WTC11 (cell line): ENCODE measurements at regions of chr16 and their contacts with region 1.

Region 1: GRCh38 chr16:50593410-50594150 is 45.4 kb downstream of the NKD1 start:
- DNase-seq: peak; percentile 71
- ATAC-seq: peak; percentile 88
- H3K4me3 Mint-ChIP-seq: no peak overlapping the region
- H3K27ac Mint-ChIP-seq: peak overlapping the region; percentile 74; the same call in 1 of the 2 replicates
- H3K4me1 Mint-ChIP-seq: peaks cover 28% of the 10 kb centered on the region
- H3K27me3 Mint-ChIP-seq: no peaks in the 10 kb centered on the region
- CTCF ChIP-seq: 0 out of 2 replicates have a peak, but pooled peaks have one; percentile 19

Region 2: DNA sequence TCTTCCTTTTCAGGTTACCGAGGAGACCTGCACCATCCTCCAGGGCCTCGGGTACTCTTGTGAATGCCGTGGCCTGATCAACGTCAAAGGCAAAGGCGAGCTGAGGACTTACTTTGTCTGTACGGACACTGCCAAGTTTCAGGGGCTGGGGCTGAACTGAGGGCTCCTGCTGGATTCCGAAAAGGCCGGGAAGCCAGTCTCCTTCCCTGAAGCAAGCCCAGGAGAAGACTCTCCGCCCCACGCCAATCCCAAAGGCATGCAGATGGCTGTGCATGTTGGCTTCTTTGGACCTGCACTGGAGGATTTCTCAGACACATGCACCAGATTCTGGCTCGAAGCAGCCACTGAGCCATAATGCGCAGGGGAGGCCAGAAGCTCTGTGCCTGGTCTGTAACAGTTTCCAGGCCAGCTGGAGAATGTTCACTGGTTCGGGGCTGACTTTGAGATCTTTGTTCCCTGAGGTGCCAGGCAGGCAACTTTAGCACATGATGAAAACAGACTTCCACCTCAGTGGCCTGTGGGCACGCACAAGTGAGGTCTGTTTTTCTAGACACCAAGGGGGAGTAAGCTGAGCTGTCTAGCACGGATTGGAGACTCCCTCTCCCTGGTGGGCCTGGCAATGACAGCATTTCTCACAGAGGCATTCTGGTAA is 278.1 kb before region 1 on chr16:
- CTCF ChIA-PET with region 1: no interaction called
- POLR2A ChIA-PET with region 1: no interaction called
- DNase-seq: no peak
- ATAC-seq: no peak
- H3K4me3 Mint-ChIP-seq: no peak overlapping the region
- H3K27ac Mint-ChIP-seq: no peak overlapping the region
- H3K4me1 Mint-ChIP-seq: no peaks in the 10 kb centered on the region
- H3K27me3 Mint-ChIP-seq: no peaks in the 10 kb centered on the region
- CTCF ChIP-seq: no peak

Region 3: DNA sequence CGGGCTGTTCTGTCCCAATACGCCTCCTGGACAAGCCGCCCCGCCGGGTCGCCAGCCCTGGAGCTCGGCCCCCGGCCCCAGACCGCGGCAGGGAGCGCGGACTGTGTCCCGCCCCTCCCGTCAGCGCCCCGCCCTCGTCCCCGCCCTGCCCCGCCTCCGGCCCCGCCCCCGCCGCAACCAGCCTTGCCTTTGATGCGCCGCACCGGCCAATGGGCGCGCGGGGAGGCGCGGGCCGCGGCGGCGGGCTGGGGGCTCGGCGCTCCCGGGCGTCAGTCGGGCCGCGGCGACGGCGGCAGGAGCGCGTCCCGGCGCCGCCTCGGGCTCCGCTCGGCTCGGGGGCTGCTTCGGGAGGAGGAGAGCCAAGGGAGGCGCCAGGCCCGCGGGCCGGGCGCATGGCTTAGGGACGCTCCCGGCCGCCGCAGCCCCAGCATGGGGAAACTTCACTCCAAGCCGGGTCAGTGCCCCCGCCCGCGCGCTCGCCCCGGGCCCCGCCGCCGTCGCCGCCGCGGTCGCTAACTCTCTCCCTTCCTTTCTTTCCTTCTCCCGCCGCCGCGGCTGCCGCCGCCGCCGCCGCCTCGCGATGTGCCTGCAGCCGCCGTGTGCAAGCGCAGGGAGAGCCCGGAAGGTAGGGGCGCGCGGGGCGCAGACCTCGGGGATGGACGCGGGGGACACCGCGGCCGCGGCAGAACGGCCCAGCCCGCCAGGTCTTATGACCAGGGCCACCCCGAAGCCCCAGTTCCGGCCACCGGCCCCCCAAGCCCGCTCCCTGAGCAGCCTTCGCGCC is 45.3 kb before region 1 on chr16 and contains the start of gene NKD1:
- CTCF ChIA-PET with region 1: interaction called, 11 read pairs
- POLR2A ChIA-PET with region 1: no interaction called
- DNase-seq: peak; percentile 69
- ATAC-seq: peak; percentile 79
- H3K4me3 Mint-ChIP-seq: peak within 1 kb of the TSS; percentile 75
- H3K27ac Mint-ChIP-seq: no peak within 1 kb of the TSS
- H3K4me1 Mint-ChIP-seq: peaks cover 11% of the 10 kb centered on the region
- H3K27me3 Mint-ChIP-seq: peaks cover 46% of the 10 kb centered on the region
- CTCF ChIP-seq: no peak
- total RNA-seq, gene NKD1: 6.0 to 9.3 TPM (median 9.1 TPM) in 3 replicates

Region 4: DNA sequence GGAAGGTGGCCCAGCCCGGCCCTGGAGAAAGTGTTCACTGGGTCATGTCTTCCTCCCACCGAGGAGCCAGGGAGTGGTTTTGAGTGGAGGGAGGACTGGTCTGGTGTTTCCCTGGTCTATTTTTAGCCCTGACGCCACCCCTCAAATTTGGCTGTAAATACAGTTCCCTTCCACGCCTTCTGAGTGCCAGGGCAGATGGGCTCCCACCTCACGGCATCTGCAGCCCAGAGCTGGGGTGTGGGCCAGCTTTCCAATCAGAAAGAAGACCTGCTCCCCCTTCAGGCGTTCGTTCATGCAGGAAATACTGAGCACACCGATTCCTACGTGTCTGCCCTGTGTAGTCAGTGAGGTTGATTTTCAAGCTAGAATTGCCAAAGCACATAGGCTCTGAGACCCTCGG is 33.8 kb after region 1 on chr16:
- CTCF ChIA-PET with region 1: interaction called, 27 read pairs
- POLR2A ChIA-PET with region 1: no interaction called
- DNase-seq: peak; percentile 42
- ATAC-seq: peak; percentile 89
- H3K4me3 Mint-ChIP-seq: no peak overlapping the region
- H3K27ac Mint-ChIP-seq: no peak overlapping the region
- H3K4me1 Mint-ChIP-seq: peaks cover 3% of the 10 kb centered on the region; the same call in 1 of the 2 replicates
- H3K27me3 Mint-ChIP-seq: no peaks in the 10 kb centered on the region
- CTCF ChIP-seq: no peak

Region 5: DNA sequence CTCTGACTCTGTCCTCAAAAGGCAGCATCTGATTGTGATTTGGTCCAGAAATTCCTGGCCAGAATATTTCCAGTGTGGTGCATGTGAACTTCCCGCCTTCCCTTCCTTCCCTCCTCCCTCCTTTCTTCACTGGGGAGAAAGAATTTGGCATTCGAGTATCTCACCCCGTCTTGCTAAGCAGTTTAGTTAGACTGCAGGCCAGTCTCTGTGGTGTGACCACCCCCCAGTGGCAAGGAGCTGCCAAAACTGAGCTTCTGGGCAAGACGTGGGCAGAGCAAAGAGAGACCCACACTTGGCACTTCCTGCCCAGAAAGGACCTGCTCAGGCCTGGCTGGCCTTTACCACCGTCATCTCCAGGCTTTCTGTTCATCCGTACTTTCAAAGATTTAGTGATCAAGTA is 51.1 kb after region 1 on chr16:
- CTCF ChIA-PET with region 1: interaction called, 22 read pairs
- POLR2A ChIA-PET with region 1: interaction called, 3 read pairs
- DNase-seq: peak; percentile 35
- ATAC-seq: peak; percentile 72
- H3K4me3 Mint-ChIP-seq: no peak overlapping the region
- H3K27ac Mint-ChIP-seq: no peak overlapping the region
- H3K4me1 Mint-ChIP-seq: peaks cover 15% of the 10 kb centered on the region
- H3K27me3 Mint-ChIP-seq: no peaks in the 10 kb centered on the region
- CTCF ChIP-seq: no peak

Region 6: DNA sequence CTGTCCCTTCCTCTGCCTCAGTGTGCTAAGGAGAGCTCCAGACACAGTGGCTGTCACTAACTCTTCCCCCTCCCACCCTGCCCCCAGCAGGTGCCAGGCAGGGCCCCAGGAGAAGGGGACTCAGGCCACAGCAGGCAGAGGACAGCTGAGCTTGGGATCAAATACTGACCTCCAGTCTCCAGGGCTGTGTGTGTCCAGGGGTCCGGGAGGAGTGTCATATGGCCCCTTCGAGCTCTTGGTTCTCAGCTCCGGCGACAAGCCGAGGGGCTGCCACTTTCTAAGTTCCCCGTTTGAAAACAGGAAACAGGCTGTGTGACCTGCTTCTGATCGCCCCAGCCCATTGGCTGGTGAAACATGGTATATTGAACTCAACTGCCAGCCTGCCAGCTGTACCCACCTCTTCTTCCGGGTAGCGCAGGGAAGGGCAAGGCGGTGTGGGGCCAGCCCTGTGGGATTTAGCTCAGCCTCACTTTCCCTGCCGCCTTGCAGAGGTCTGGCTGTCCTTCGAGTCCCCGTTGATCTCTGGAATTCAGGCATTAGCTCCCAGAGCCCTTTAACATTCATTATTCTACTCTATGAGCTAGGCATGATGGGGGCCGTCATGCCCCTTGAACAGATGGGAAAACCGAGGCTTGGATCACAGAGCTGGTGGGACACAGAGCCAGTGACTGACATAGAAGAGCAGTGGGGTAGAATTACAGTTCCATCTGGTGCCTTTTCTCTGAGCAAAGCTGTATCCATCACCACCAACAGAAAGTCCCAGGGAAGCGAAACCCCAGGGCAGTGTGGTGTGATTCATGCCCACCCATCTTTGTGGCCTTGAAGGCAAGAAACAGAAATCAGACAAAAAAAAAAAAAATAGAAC is 87.7 kb after region 1 on chr16 and contains the start of gene SNX20:
- CTCF ChIA-PET with region 1: interaction called, 19 read pairs
- POLR2A ChIA-PET with region 1: no interaction called
- DNase-seq: no peak
- ATAC-seq: no peak
- H3K4me3 Mint-ChIP-seq: no peak within 1 kb of the TSS
- H3K27ac Mint-ChIP-seq: no peak within 1 kb of the TSS
- H3K4me1 Mint-ChIP-seq: no peaks in the 10 kb centered on the region
- H3K27me3 Mint-ChIP-seq: no peaks in the 10 kb centered on the region
- CTCF ChIP-seq: no peak
- total RNA-seq, gene SNX20: 0.14 TPM in 1 of 3 replicates, not detected in the others